Spleen (tissue), 13 donors: ENCODE measurements at regions of chr11 and their contacts with region 1.

Region 1: GRCh38 chr11:101848262-101848661 is 66.5 kb upstream of the CEP126 start:
- DNase-seq: no peak
- H3K4me3 ChIP-seq: no peak overlapping the region
- H3K27ac ChIP-seq: no peak overlapping the region
- H3K4me1 ChIP-seq: no peaks in the 10 kb centered on the region
- H3K27me3 ChIP-seq: no peaks in the 10 kb centered on the region
- CTCF ChIP-seq: peak in 7 of 11 experiments; percentile 28 to 50 (median 43)
- POLR2A ChIP-seq: no peak

Region 2: DNA sequence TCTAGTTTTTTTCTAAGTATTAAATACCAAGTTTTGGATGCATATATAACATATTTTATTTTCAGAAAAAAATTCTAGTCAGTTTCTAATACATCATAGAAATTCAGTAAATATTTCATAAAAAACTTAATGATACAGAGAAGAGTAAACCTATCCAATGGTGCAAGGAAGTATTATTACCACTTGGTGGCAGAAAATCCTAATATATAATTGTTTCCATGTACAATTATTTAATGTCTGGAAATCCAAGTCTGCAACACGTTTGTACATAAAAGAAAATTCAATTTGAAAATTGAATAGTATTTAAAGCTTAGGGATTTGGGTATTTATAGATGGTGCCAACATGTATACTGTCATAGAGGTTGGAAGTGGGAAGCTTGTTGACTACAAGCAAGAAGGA is 391.4 kb before region 1 on chr11:
- intact Hi-C with region 1: loop called (anchors 5 kb)
- DNase-seq: no peak
- H3K4me3 ChIP-seq: no peak overlapping the region
- H3K27ac ChIP-seq: no peak overlapping the region
- H3K4me1 ChIP-seq: no peaks in the 10 kb centered on the region
- H3K27me3 ChIP-seq: no peaks in the 10 kb centered on the region
- CTCF ChIP-seq: peak in 10 of 11 experiments; percentile 13 to 69 (median 52)
- POLR2A ChIP-seq: no peak